ENCODE measurements at regions of chr17 and their contacts with region 1.

Region 1: DNA sequence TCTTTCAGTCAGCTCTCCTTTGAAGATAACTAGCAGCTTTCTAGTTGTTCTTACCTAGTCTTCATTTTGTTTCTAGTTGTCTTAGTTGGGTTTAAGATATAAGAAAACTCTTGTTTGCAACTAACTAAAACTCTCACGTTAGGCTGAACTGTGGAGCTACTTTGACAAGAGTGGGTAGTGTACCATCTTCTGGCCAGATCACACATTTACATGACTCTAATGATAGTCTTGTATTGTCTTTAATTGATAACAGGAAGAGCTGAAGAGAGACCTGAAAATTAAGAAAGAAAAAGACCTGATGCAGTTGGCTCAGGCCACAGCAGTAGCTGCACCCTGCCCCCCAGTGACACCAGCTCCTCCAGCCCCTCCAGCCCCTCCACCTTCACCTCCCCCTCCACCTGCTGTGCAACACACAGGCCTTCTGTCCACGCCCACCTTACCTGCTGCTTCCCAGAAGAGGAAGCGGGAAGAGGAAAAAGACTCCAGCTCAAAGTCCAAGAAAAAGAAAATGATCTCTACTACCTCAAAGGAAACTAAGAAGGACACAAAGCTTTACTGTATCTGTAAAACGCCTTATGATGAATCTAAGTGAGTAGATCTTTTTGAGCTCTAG is 36.9 kb downstream of the C17orf58 start:
- DNase-seq: no peak
- ATAC-seq: no peak
- H3K4me3 ChIP-seq: no peak overlapping the region
- H3K27ac ChIP-seq: no peak overlapping the region
- H3K4me1 ChIP-seq: no peaks in the 10 kb centered on the region
- H3K27me3 ChIP-seq: no peaks in the 10 kb centered on the region
- CTCF ChIP-seq: no peak

Region 2: DNA sequence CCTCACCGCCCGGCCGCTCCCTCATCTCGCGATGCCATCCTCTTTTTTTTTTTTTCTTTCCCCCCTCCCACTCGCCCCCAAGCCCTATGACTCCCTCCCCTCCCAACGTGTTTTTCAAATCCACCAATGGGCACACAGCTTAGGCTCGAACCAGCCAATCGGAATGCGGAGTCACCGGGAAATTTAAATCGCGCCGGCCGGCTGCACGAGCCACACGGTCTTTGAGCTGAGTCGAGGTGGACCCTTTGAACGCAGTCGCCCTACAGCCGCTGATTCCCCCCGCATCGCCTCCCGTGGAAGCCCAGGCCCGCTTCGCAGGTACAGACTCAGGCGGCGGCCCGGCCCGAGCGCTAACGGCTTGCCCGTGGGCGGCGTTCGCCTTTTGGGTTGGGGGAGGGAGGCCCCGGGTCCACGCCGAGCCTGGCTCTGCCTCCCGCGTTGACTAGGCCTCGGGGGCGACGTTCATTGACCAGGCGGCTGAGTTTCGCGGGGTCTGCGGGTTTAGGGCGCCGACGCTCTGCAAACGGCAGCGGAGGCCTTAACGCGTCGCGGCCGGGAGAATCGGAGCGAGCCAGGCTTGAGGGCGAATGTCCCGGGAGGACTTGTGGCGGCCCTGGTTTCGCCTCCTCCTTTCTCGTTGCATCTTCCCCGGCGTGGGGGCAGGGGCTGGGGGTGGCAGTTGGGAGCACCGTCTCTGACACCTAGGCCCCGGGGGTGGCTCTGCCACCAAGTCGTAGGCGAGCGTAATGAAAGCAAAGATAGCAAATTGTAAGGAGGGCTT is 76.3 kb after region 1 on chr17 and contains the start of gene KPNA2:
- intact Hi-C with region 1: loop called in 1 of 3 experiments (anchors 10 kb)
- DNase-seq: peak; percentile 87 to 95 (median 92)
- ATAC-seq: peak; percentile 94 to 98 (median 96)
- H3K4me3 ChIP-seq: peak within 1 kb of the TSS; percentile 62 to 93 (median 87)
- H3K27ac ChIP-seq: peak within 1 kb of the TSS; percentile 2 to 58 (median 30)
- H3K4me1 ChIP-seq: peaks cover 0 to 8% (median 4%) of the 10 kb centered on the region in 3 donors
- H3K27me3 ChIP-seq: no peaks in the 10 kb centered on the region
- CTCF ChIP-seq: no peak
- total RNA-seq, gene KPNA2: 3.3 to 10.5 (median 5.7) TPM